Mammary epithelial cell (primary cell): ENCODE measurements at regions of chr5 and their contacts with region 1.

Region 1: DNA sequence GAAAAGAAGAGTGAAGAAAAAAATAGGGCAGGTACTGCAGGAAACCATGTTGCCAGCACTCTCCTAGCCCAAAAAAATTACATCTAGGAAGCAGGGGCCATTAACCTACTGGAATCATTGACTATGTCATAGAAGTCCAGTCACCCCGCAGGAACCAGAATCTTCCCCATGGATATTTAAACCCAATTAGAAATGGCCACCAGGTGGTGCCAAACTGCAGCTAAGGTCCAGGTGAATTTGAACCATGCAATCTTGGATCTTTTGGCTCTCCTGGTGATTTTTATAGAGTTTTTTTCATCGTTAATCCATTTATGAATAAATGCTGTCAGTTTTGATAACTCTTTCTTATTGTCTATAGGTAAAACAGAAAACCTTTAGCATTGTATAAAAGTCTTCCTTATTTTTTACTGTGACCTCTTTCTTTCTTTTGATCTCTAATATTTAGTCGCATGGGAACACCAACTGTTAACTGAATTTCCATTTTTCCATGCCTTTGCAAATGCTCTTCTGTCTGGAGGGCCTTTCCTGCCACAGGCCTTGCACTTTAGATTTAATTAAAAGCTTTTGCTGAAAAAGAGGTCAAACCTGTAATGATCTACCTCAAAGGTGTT is 147.5 kb upstream of the FGF10 start:
- DNase-seq: peak; percentile 5
- H3K4me3 ChIP-seq: no peak overlapping the region
- H3K27ac ChIP-seq: no peak overlapping the region
- H3K4me1 ChIP-seq: no peaks in the 10 kb centered on the region
- H3K27me3 ChIP-seq: no peaks in the 10 kb centered on the region
- CTCF ChIP-seq: peak; percentile 63 to 78

Region 2: DNA sequence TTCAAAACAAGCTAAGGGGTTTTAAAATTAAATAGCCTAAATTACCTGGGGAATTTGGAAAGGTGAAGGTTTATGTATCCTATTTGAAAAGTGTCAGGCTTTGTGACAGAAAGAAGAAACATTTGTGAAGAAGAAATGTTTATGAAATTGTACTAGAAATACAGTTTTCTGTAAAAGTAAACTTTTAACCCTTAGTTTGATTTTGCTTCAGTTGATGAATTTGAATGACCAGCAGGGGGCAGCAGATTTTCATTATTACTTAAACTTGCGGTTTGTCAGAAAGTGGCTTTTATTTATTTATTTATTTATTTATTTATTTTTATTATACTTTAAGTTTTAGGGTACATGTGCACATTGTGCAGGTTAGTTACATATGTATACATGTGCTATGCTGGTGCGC is 875.7 kb before region 1 on chr5:
- CTCF ChIA-PET with region 1: no interaction called
- dilution Hi-C with region 1: no loop called
- in situ Hi-C with region 1: no loop called
- intact Hi-C with region 1: loop called (anchors 10 kb)
- DNase-seq: peak; percentile 5
- H3K4me3 ChIP-seq: no peak overlapping the region
- H3K27ac ChIP-seq: no peak overlapping the region
- H3K4me1 ChIP-seq: peaks cover 4% of the 10 kb centered on the region
- H3K27me3 ChIP-seq: no peaks in the 10 kb centered on the region
- CTCF ChIP-seq: peak; percentile 41 to 43

Region 3: GRCh38 chr5:44372028-44372427 is 164.7 kb before region 1 on chr5:
- CTCF ChIA-PET with region 1: no interaction called
- dilution Hi-C with region 1: no loop called
- in situ Hi-C with region 1: no loop called
- intact Hi-C with region 1: no loop called
- DNase-seq: no peak
- H3K4me3 ChIP-seq: no peak overlapping the region
- H3K27ac ChIP-seq: no peak overlapping the region
- H3K4me1 ChIP-seq: no peaks in the 10 kb centered on the region
- H3K27me3 ChIP-seq: no peaks in the 10 kb centered on the region
- CTCF ChIP-seq: no peak

Region 4: GRCh38 chr5:44497606-44498005 is 39.1 kb before region 1 on chr5:
- CTCF ChIA-PET with region 1: no interaction called
- dilution Hi-C with region 1: no loop called
- in situ Hi-C with region 1: no loop called
- intact Hi-C with region 1: no loop called
- DNase-seq: no peak
- H3K4me3 ChIP-seq: no peak overlapping the region
- H3K27ac ChIP-seq: no peak overlapping the region
- H3K4me1 ChIP-seq: no peaks in the 10 kb centered on the region
- H3K27me3 ChIP-seq: no peaks in the 10 kb centered on the region
- CTCF ChIP-seq: no peak

Region 5: DNA sequence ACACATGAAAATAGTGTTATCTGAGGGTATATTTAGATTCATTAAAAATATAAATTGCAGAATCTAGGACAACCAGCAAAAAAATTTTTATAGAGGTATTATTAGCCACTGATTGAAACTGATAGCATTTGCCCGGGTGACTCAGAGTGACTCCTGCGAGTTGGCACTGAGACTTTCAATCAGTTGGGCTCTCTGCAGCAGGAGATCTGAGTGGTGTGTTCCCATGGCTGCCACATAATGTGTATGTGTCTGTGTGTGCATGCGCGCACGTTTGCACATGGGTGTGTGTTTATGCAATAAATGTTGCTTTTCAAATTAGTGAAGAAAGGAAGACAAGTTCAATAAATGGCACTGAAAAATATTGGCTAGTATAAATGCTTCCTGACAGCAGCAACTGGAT is 171.9 kb after region 1 on chr5:
- CTCF ChIA-PET with region 1: no interaction called
- dilution Hi-C with region 1: no loop called
- in situ Hi-C with region 1: no loop called
- intact Hi-C with region 1: no loop called
- DNase-seq: peak; percentile 37
- H3K4me3 ChIP-seq: no peak overlapping the region
- H3K27ac ChIP-seq: no peak overlapping the region
- H3K4me1 ChIP-seq: no peaks in the 10 kb centered on the region
- H3K27me3 ChIP-seq: no peaks in the 10 kb centered on the region
- CTCF ChIP-seq: no peak

Region 6: DNA sequence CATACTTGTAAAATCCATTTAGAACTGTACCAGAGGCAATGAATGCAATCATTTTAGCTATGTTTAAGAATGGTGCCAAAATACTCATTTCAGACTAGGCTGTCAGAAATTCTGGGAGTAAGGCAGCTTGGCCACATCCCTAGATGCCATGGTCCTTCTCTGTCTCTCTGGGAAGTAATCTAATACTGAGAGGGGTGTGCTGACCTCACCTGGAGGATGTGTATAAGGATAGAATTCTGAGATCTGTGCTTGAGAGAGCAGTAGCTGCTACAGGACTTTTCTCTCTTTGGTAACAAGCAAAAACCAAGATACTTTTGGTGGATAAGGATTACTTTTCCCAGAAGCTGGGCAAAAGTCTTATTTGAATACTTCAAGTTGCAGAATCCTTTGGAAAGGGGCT is 203.9 kb after region 1 on chr5:
- CTCF ChIA-PET with region 1: no interaction called
- dilution Hi-C with region 1: no loop called
- in situ Hi-C with region 1: loop called in 1 of 2 experiments (anchors 25 kb)
- intact Hi-C with region 1: loop called (anchors 1 kb)
- DNase-seq: peak; percentile 4
- H3K4me3 ChIP-seq: no peak overlapping the region
- H3K27ac ChIP-seq: no peak overlapping the region
- H3K4me1 ChIP-seq: no peaks in the 10 kb centered on the region
- H3K27me3 ChIP-seq: no peaks in the 10 kb centered on the region
- CTCF ChIP-seq: peak in 1 of 2 donors; percentile 50

Region 7: DNA sequence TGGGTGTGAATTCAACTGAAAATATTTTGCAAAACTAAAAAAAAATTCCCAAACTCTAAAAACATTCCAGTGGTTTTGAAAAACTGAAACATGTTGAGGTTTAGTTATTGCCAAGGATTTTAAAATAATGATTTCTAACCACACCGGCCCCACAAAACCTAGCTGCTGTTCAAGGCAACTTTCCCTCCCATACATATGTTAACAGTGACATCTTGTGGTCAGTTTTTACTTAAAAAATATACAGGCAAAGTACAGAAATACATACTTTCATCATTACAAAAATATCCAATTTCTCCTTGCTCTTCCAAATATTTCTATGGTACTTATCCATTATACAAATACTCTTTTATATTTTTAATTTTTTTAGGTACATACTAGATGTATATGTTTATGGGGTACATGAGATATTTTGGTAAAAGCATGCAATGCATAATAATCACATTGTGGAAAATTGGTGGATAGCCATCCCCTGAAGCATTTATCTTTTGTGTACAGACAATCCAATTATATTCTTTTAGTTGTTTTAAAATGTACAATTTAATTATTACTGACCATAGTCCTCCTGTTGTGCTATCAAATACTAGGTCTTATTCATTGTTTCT is 237.6 kb after region 1 on chr5:
- CTCF ChIA-PET with region 1: interaction called, 4 read pairs
- dilution Hi-C with region 1: loop called (anchors 25 kb)
- in situ Hi-C with region 1: loop called (anchors 5 to 10 kb)
- intact Hi-C with region 1: loop called (anchors 1 kb)
- DNase-seq: peak; percentile 27
- H3K4me3 ChIP-seq: no peak overlapping the region
- H3K27ac ChIP-seq: no peak overlapping the region
- H3K4me1 ChIP-seq: no peaks in the 10 kb centered on the region
- H3K27me3 ChIP-seq: no peaks in the 10 kb centered on the region
- CTCF ChIP-seq: peak; percentile 32 to 58

Region 8: DNA sequence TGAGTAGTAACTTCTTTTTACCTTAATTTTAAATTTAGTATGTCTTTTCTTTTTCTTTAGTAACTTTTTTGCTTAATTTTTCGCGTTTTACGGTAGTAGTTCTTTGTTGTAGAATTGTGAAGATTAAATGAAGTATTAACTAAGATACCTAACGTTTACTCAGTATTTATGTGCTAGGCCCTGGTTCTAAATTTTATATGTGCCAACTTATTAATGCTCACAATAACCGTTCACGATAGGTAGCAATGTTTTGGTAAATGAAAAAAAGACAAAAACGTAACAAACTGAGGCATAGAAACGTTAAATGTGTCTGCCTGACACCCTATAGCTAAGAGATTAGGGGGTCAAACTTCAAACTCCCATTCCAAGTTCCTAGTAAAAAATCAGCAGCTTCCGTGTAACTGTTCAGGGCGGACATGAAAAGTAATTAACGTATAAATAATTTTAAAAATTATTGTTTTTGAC is 273.2 kb after region 1 on chr5:
- CTCF ChIA-PET with region 1: no interaction called
- dilution Hi-C with region 1: no loop called
- in situ Hi-C with region 1: no loop called
- intact Hi-C with region 1: no loop called
- DNase-seq: no peak
- H3K4me3 ChIP-seq: peak overlapping the region; percentile 82 to 93 (median 91)
- H3K27ac ChIP-seq: peak overlapping the region; percentile 71
- H3K4me1 ChIP-seq: peaks cover 8% of the 10 kb centered on the region
- H3K27me3 ChIP-seq: no peaks in the 10 kb centered on the region
- CTCF ChIP-seq: no peak